SK-N-SH (cell line): ENCODE measurements at regions of chr12 and their contacts with region 1.

Region 1: DNA sequence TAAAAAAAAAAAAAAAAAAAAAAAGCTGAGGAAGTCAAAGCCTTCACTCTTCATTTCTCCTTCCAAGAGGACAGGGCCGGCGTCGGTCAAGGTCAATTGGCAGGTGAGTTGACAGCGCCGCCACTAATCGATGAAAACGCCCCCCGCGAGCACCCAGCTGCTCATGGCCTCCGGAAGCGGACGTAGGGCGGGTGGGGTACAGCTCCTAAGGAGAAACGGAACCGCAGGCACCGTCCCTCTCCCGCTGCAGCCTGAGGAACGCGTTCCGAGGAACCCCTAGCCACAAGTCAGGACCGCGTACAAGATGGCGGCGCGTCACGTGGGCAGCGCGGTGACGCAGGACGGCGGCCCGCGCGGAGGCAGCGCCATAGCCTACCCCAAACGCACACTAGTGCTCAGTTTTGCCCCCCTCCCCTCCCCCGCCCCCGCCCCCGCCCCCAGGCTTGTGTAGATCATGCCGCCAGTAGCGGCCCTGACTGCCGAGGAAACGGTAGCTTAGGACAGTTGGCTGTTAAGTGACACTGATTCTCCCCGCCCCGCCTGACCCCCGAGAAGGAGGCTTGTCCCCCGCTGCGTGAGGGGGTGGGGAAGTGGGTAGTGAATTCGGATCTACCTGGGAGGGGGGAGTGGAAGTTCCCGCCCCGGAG is at the start of gene ATF1:
- DNase-seq: peak; percentile 95
- H3K4me3 ChIP-seq: peak within 1 kb of the TSS; percentile 71 to 73
- H3K27ac ChIP-seq: peak within 1 kb of the TSS; percentile 91 to 93
- H3K4me1 ChIP-seq: peaks cover 8 to 9% of the 10 kb centered on the region in 2 experiments; a peak in 1 of 4 replicates
- H3K27me3 ChIP-seq: no peaks in the 10 kb centered on the region
- CTCF ChIP-seq: no peak
- EP300 ChIP-seq: no peak
- RAD21 ChIP-seq: no peak
- polyA plus RNA-seq, gene ATF1: 25.0 and 34.2 TPM in 2 replicates

Region 2: DNA sequence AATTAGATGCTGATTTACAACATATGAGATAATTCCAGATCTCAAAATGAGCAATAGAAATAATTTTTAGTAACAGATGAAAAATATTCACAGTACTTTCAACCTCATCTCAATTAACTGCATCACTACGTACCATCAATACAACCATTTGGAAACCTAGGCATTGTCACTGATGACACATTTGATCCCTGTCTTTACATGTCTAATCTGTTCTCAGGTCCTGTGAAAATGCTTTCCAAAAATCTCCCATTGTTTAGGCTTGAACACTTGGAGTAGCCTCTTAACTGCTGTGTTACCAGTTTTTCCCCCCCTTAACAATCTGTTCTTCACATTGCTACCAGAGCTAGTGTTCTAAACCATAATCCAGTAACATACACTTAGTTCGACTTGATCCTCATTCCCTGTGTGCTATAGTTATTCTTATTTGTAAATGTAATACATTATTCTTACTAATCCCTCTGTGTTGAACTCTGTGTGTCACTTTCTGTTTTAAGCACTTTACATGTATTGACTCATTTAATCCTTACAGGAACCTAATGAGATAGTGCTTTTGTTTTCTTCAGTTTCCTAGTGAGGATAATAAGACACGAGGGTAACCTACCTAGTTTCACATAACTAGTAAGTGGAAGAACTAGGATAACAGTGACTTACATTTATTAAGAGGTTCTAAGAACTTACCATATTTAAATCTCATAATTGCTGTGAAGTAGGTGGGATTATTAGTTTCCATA is 321.4 kb before region 1 on chr12:
- CTCF ChIA-PET with region 1: no interaction called
- POLR2A ChIA-PET with region 1: no interaction called
- DNase-seq: no peak
- H3K4me3 ChIP-seq: no peak overlapping the region
- H3K27ac ChIP-seq: no peak overlapping the region
- H3K4me1 ChIP-seq: no peaks in the 10 kb centered on the region
- H3K27me3 ChIP-seq: no peaks in the 10 kb centered on the region
- CTCF ChIP-seq: no peak
- EP300 ChIP-seq: no peak
- RAD21 ChIP-seq: no peak

Region 3: DNA sequence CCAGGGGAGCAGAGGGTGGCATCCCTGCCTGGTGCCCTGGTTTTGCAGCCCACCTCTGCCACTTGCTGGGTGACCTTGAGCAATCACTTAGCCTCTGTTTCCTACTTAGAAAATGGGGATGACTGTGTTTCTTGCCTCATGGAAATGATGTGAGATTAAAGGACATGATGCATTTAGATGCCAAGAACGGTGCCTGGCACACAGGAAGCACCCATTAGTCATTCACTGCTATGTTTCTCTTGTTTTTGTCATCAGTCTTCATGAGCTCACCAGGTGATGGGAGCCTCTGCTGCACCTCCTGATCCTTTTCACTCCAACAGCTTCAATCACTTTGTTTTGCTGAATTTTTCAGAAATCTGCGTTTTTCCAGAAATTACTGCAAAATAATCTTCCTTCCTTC is 23.5 kb before region 1 on chr12:
- CTCF ChIA-PET with region 1: no interaction called
- POLR2A ChIA-PET with region 1: no interaction called
- DNase-seq: no peak
- H3K4me3 ChIP-seq: no peak overlapping the region
- H3K27ac ChIP-seq: no peak overlapping the region
- H3K4me1 ChIP-seq: no peaks in the 10 kb centered on the region
- H3K27me3 ChIP-seq: no peaks in the 10 kb centered on the region
- CTCF ChIP-seq: no peak
- EP300 ChIP-seq: no peak
- RAD21 ChIP-seq: no peak

Region 4: GRCh38 chr12:50775251-50775650 is 11.5 kb after region 1 on chr12:
- CTCF ChIA-PET with region 1: interaction called, 19 read pairs
- POLR2A ChIA-PET with region 1: no interaction called
- DNase-seq: no peak
- H3K4me3 ChIP-seq: no peak overlapping the region
- H3K27ac ChIP-seq: no peak overlapping the region
- H3K4me1 ChIP-seq: no peaks in the 10 kb centered on the region
- H3K27me3 ChIP-seq: no peaks in the 10 kb centered on the region
- CTCF ChIP-seq: no peak
- EP300 ChIP-seq: no peak
- RAD21 ChIP-seq: no peak

Region 5: DNA sequence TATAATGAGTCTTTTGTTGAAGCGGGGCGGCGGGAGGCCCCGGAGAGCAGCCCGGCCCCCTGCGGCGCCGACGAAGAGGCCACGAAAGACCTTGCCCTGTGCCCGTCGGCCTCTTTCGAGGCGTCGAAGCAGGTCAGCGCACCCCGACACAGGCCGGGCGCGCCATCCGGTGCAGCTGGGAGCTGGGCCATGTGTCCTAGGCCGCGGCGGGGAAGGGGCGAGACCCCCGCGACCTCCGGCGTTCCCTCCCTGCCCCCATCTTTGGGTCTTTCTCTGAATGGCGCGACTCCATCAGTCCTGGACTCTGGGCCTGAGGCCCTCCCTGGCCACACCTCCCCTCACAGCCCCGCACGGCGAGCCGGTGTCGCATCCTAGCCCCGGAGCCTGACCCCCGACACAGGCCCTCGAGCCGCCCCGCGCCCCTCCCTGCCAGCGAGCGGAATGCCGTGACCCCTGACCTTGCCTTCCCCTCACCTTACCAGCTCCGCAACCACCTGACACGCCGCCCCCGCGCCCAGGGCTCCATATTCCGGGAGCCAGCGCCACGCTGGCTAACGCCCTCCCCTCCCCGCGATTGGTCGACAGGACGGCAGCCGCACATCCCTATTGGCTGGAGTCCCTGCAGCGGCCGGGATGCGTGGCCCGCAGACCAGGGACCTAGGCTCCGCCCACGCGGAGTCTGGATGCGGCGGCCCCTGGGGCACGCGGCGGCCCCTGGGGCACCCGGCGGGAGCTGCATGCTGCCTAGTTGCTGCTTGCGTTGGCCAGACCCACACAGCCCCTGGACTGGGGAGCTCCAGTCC is 262.3 kb after region 1 on chr12 and contains the start of gene SLC11A2:
- CTCF ChIA-PET with region 1: interaction called, 11 read pairs
- POLR2A ChIA-PET with region 1: interaction called, 3 read pairs
- DNase-seq: peak; percentile 98
- H3K4me3 ChIP-seq: peak within 1 kb of the TSS; percentile 57 to 88
- H3K27ac ChIP-seq: peak within 1 kb of the TSS; percentile 48 to 81
- H3K4me1 ChIP-seq: peaks cover 0 to 4% of the 10 kb centered on the region in 2 experiments; a peak in 2 of 4 replicates
- H3K27me3 ChIP-seq: no peaks in the 10 kb centered on the region
- CTCF ChIP-seq: no peak; the same call in 1 of the 2 replicates
- EP300 ChIP-seq: no peak
- RAD21 ChIP-seq: no peak
- polyA plus RNA-seq, gene SLC11A2: 27.7 and 45.0 TPM in 2 replicates